Caco-2 (cell line): ENCODE measurements at regions of chr3 and their contacts with region 1.

Region 1: GRCh38 chr3:100463002-100463401 is 29.4 kb upstream of the TMEM45A start:
- DNase-seq: peak in 1 of 2 experiments; percentile 58
- H3K4me3 ChIP-seq: no peak overlapping the region
- H3K4me3 Mint-ChIP-seq: no peak overlapping the region
- H3K27ac Mint-ChIP-seq: no peak overlapping the region
- H3K4me1 ChIP-seq: no peaks in the 10 kb centered on the region
- H3K4me1 Mint-ChIP-seq: no peaks in the 10 kb centered on the region
- H3K27me3 ChIP-seq: no peaks in the 10 kb centered on the region
- H3K27me3 Mint-ChIP-seq: no peaks in the 10 kb centered on the region
- CTCF ChIP-seq: peak; percentile 57 to 74

Region 2: GRCh38 chr3:100316641-100317069 is 146.3 kb before region 1 on chr3:
- CTCF ChIA-PET with region 1: no interaction called
- POLR2A ChIA-PET with region 1: no interaction called
- intact Hi-C with region 1: loop called (anchors 1 kb)
- DNase-seq: peak; percentile 39 to 59
- H3K4me3 ChIP-seq: no peak overlapping the region
- H3K4me3 Mint-ChIP-seq: no peak overlapping the region
- H3K27ac Mint-ChIP-seq: no peak overlapping the region
- H3K4me1 ChIP-seq: no peaks in the 10 kb centered on the region
- H3K4me1 Mint-ChIP-seq: no peaks in the 10 kb centered on the region
- H3K27me3 ChIP-seq: no peaks in the 10 kb centered on the region
- H3K27me3 Mint-ChIP-seq: no peaks in the 10 kb centered on the region
- CTCF ChIP-seq: peak; percentile 59 to 64

Region 3: GRCh38 chr3:100437721-100438622 is 25.0 kb before region 1 on chr3:
- CTCF ChIA-PET with region 1: no interaction called
- POLR2A ChIA-PET with region 1: no interaction called
- intact Hi-C with region 1: no loop called
- DNase-seq: no peak
- H3K4me3 ChIP-seq: no peak overlapping the region
- H3K4me3 Mint-ChIP-seq: no peak overlapping the region
- H3K27ac Mint-ChIP-seq: no peak overlapping the region
- H3K4me1 ChIP-seq: no peaks in the 10 kb centered on the region
- H3K4me1 Mint-ChIP-seq: peaks cover 5% of the 10 kb centered on the region
- H3K27me3 ChIP-seq: no peaks in the 10 kb centered on the region
- H3K27me3 Mint-ChIP-seq: no peaks in the 10 kb centered on the region
- CTCF ChIP-seq: no peak

Region 4: DNA sequence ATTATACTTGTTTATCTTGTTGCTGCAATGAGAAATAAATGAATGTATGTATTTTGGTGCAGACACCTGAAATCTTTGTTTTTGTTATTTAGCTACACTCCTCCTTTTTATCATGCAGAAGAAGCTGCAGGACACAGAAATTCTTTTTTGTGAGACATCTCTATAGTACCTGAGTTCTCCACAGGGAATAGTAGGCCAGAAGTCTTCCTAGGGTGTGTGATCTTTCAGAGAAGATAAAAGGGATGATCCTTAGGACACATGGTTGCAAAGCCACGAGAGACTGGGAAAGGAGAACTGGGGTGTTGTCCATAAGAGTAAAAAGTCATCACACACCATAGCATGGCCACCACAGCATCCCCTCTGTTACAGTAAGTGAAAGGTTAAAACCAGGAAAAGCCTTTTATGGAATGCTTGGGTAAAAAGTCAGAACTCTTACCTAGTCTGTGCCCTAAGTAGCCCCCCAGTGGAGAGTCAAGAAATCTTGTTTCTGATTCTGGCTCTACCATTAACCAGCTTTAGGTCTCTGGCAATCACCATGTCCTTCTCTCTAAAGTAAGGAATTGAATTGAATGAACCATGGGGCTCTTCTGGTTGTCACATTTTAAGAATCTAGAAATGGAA is 114.5 kb after region 1 on chr3:
- CTCF ChIA-PET with region 1: interaction called, 7 read pairs
- POLR2A ChIA-PET with region 1: no interaction called
- intact Hi-C with region 1: loop called (anchors 1 kb)
- DNase-seq: no peak
- H3K4me3 ChIP-seq: no peak overlapping the region
- H3K4me3 Mint-ChIP-seq: no peak overlapping the region
- H3K27ac Mint-ChIP-seq: no peak overlapping the region
- H3K4me1 ChIP-seq: 0 out of 2 replicates have a peak, but pooled peaks cover 4% of the 10 kb centered on the region
- H3K4me1 Mint-ChIP-seq: no peaks in the 10 kb centered on the region
- H3K27me3 ChIP-seq: no peaks in the 10 kb centered on the region
- H3K27me3 Mint-ChIP-seq: no peaks in the 10 kb centered on the region
- CTCF ChIP-seq: no peak

Region 5: GRCh38 chr3:100603469-100603868 is 140.5 kb after region 1 on chr3:
- CTCF ChIA-PET with region 1: interaction called, 36 read pairs
- POLR2A ChIA-PET with region 1: no interaction called
- intact Hi-C with region 1: no loop called
- DNase-seq: peak; percentile 44 to 63
- H3K4me3 ChIP-seq: no peak overlapping the region
- H3K4me3 Mint-ChIP-seq: peak overlapping the region; percentile 69
- H3K27ac Mint-ChIP-seq: peak overlapping the region; percentile 81
- H3K4me1 ChIP-seq: peaks cover 37% of the 10 kb centered on the region
- H3K4me1 Mint-ChIP-seq: peaks cover 47% of the 10 kb centered on the region
- H3K27me3 ChIP-seq: no peaks in the 10 kb centered on the region
- H3K27me3 Mint-ChIP-seq: no peaks in the 10 kb centered on the region
- CTCF ChIP-seq: peak; percentile 32 to 68

Region 6: GRCh38 chr3:100634493-100635272 is 171.7 kb after region 1 on chr3:
- CTCF ChIA-PET with region 1: interaction called, 28 read pairs
- POLR2A ChIA-PET with region 1: no interaction called
- intact Hi-C with region 1: loop called (anchors 1 kb)
- DNase-seq: peak; percentile 80 to 84
- H3K4me3 ChIP-seq: 0 out of 2 replicates have a peak overlapping the region, but pooled peaks have one; percentile 2
- H3K4me3 Mint-ChIP-seq: peak overlapping the region; percentile 69
- H3K27ac Mint-ChIP-seq: peak overlapping the region; percentile 63
- H3K4me1 ChIP-seq: peaks cover 35% of the 10 kb centered on the region
- H3K4me1 Mint-ChIP-seq: peaks cover 12% of the 10 kb centered on the region
- H3K27me3 ChIP-seq: no peaks in the 10 kb centered on the region
- H3K27me3 Mint-ChIP-seq: no peaks in the 10 kb centered on the region
- CTCF ChIP-seq: no peak

Region 7: DNA sequence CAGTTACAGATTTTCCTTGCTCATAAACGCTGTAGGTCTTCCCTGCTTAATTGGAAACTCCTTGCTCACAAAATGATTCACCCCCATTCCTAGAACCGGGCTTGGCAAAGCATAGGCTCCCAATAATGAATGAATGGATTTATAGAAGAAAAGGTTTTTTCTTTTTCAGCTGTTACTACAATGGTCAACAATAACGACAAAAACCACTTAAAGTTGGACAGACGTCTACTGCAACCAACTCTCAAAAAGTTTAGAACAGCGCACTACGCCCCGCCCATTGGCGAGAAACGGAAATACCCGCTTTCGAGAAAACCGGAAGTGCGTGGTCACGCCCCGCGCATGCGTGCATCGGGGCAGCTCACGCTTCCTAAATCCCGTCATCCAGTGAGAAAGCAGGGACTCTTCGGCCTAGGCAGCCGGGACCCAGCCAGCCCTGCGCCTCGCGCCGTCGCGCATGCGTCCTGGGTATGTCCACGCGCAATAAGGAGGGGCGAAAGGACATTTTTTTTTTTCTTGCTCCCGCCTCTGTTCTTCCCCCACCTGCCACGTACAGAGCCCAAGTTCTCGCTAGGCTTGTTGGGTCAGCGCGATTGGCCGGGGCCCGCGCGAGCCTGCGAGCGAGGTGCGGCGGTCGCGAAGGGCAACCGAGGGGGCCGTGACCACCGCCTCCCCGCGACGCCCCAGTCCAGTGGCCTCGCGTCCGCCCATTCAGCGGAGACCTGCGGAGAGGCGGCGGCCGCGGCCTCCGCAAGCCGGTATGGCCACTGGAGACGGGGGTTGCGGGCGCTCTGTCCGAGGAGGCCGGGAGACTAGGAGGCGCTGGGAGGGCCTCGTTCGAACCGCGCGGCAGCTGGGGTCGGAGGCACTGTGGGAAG is 246.2 kb after region 1 on chr3 and contains the start of gene TFG:
- CTCF ChIA-PET with region 1: interaction called, 16 read pairs
- POLR2A ChIA-PET with region 1: no interaction called
- intact Hi-C with region 1: loop called (anchors 1 kb)
- DNase-seq: peak; percentile 98
- H3K4me3 ChIP-seq: peak within 1 kb of the TSS; percentile 88
- H3K4me3 Mint-ChIP-seq: peak within 1 kb of the TSS; percentile 80
- H3K27ac Mint-ChIP-seq: peak within 1 kb of the TSS; percentile 98
- H3K4me1 ChIP-seq: peaks cover 21% of the 10 kb centered on the region
- H3K4me1 Mint-ChIP-seq: peaks cover 31% of the 10 kb centered on the region
- H3K27me3 ChIP-seq: no peaks in the 10 kb centered on the region
- H3K27me3 Mint-ChIP-seq: peaks cover 4% of the 10 kb centered on the region
- CTCF ChIP-seq: no peak
- total RNA-seq, gene TFG: 128 and 138 TPM in 2 replicates

Region 8: GRCh38 chr3:100796556-100796955 is 333.6 kb after region 1 on chr3:
- CTCF ChIA-PET with region 1: interaction called, 17 read pairs
- POLR2A ChIA-PET with region 1: no interaction called
- intact Hi-C with region 1: loop called (anchors 1 kb)
- DNase-seq: no peak
- H3K4me3 ChIP-seq: no peak overlapping the region
- H3K4me3 Mint-ChIP-seq: no peak overlapping the region
- H3K27ac Mint-ChIP-seq: no peak overlapping the region
- H3K4me1 ChIP-seq: no peaks in the 10 kb centered on the region
- H3K4me1 Mint-ChIP-seq: no peaks in the 10 kb centered on the region
- H3K27me3 ChIP-seq: no peaks in the 10 kb centered on the region
- H3K27me3 Mint-ChIP-seq: peaks cover 12% of the 10 kb centered on the region
- CTCF ChIP-seq: peak in 1 of 2 experiments; percentile 6